T-cell (primary cell): ENCODE measurements at regions of chr11 and their contacts with region 1.

Region 1: GRCh38 chr11:119262668-119263351 is 54.1 kb downstream of the MCAM start:
- DNase-seq: peak in 1 of 35 experiments; percentile 46
- ATAC-seq: peak in 3 of 4 experiments; percentile 21 to 36 (median 26)
- H3K4me3 ChIP-seq: peak overlapping the region in 1 of 2 donors; percentile 15
- H3K4me3 Mint-ChIP-seq: no peak overlapping the region
- H3K27ac ChIP-seq: peak overlapping the region; percentile 79
- H3K27ac Mint-ChIP-seq: no peak overlapping the region
- H3K4me1 ChIP-seq: peaks cover 44 to 64% of the 10 kb centered on the region in 2 experiments
- H3K4me1 Mint-ChIP-seq: peaks cover 34 to 63% (median 59%) of the 10 kb centered on the region in 3 donors
- H3K27me3 ChIP-seq: no peaks in the 10 kb centered on the region
- H3K27me3 Mint-ChIP-seq: no peaks in the 10 kb centered on the region

Region 2: GRCh38 chr11:119249671-119250010 is 13.2 kb before region 1 on chr11:
- CTCF ChIA-PET with region 1: no interaction called
- POLR2A ChIA-PET with region 1: interaction called in 1 of 2 experiments, 11 read pairs
- DNase-seq: no peak
- ATAC-seq: no peak
- H3K4me3 ChIP-seq: no peak overlapping the region
- H3K4me3 Mint-ChIP-seq: no peak overlapping the region
- H3K27ac ChIP-seq: no peak overlapping the region
- H3K27ac Mint-ChIP-seq: peak overlapping the region; percentile 36 to 44
- H3K4me1 ChIP-seq: peaks cover 7 to 14% of the 10 kb centered on the region in 2 experiments
- H3K4me1 Mint-ChIP-seq: peaks cover 40 to 49% (median 41%) of the 10 kb centered on the region in 3 donors
- H3K27me3 ChIP-seq: no peaks in the 10 kb centered on the region
- H3K27me3 Mint-ChIP-seq: no peaks in the 10 kb centered on the region

Region 3: GRCh38 chr11:119284344-119285157 is 21.7 kb after region 1 on chr11:
- CTCF ChIA-PET with region 1: interaction called, 3 to 15 read pairs
- POLR2A ChIA-PET with region 1: no interaction called
- DNase-seq: peak in 11 of 35 experiments; percentile 7 to 75 (median 15)
- ATAC-seq: peak; percentile 91 to 97 (median 94)
- H3K4me3 ChIP-seq: no peak overlapping the region
- H3K4me3 Mint-ChIP-seq: no peak overlapping the region
- H3K27ac ChIP-seq: no peak overlapping the region
- H3K27ac Mint-ChIP-seq: peak overlapping the region; percentile 37 to 69
- H3K4me1 ChIP-seq: peaks cover 10 to 21% of the 10 kb centered on the region in 2 experiments
- H3K4me1 Mint-ChIP-seq: peaks cover 26 to 39% (median 30%) of the 10 kb centered on the region in 3 donors
- H3K27me3 ChIP-seq: no peaks in the 10 kb centered on the region
- H3K27me3 Mint-ChIP-seq: no peaks in the 10 kb centered on the region

Region 4: DNA sequence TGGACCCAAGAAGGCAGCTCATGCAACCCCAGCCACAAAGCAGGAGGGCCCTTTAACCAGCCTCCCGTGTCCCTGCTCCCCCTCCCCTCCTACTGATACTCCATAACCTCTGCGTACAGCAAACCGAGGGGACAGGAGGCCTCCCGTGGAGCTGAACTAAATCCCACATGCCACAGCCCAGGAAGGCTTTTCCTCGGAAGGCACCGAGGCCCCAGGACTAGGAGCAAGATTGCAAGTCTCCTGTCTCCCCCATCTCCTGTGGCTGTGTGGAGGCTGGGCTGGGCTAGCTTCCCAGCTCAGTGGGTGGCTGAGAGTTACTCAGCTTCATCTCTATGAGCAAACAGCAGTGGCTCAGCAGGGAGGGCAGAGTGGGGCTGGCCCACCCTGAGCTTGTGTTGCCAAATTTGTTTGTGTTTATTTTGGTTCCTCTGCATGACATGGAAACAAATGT is 528.9 kb after region 1 on chr11:
- CTCF ChIA-PET with region 1: no interaction called
- POLR2A ChIA-PET with region 1: no interaction called
- DNase-seq: no peak
- ATAC-seq: no peak
- H3K4me3 ChIP-seq: no peak overlapping the region
- H3K4me3 Mint-ChIP-seq: no peak overlapping the region
- H3K27ac ChIP-seq: no peak overlapping the region
- H3K27ac Mint-ChIP-seq: no peak overlapping the region
- H3K4me1 ChIP-seq: no peaks in the 10 kb centered on the region
- H3K4me1 Mint-ChIP-seq: no peaks in the 10 kb centered on the region
- H3K27me3 ChIP-seq: peaks cover 0 to 59% of the 10 kb centered on the region in 2 experiments
- H3K27me3 Mint-ChIP-seq: peaks cover 13 to 42% of the 10 kb centered on the region in 2 donors